ENCODE measurements at regions of chr13 and their contacts with region 1.

Region 1: GRCh38 chr13:44470638-44471562 is 97.3 kb downstream of the SERP2 start:
- DNase-seq: no peak
- ATAC-seq: peak in 3 of 4 donors; percentile 18 to 38 (median 23)
- H3K4me3 ChIP-seq: no peak overlapping the region
- H3K27ac ChIP-seq: no peak overlapping the region
- H3K4me1 ChIP-seq: peaks cover 48% of the 10 kb centered on the region
- H3K27me3 ChIP-seq: no peaks in the 10 kb centered on the region
- CTCF ChIP-seq: peak; percentile 66

Region 2: DNA sequence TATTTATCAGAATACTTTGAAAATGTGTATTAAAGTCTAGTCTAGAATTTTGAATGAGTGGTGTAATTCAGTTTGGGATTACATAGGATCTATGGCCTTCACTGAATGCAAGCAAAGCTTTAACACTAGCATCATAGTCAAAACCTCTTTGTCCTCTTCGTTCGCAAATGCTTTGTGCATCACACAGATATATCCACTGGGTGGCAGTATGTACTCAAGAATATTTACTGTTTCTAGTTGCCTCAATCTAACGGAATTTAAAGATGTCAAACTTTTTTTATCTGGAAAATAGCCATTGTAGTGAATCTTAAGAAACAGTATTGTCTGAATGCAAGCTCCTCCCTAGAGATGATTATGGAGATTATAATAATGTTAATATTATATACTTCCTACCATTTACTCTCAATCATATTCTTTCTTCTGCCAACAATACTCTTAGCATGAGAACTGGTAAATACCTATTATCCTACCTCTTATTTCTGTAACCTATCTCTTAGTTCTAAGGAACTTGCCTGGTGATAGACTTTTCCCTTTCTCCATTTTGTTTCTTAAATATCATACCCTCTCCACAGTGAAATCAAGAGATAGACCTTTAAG is 565.4 kb before region 1 on chr13:
- intact Hi-C with region 1: loop called in 1 of 2 experiments (anchors 5 kb)
- DNase-seq: no peak
- ATAC-seq: peak; percentile 66 to 89 (median 82)
- H3K4me3 ChIP-seq: no peak overlapping the region
- H3K27ac ChIP-seq: no peak overlapping the region
- H3K4me1 ChIP-seq: peaks cover 6% of the 10 kb centered on the region
- H3K27me3 ChIP-seq: no peaks in the 10 kb centered on the region
- CTCF ChIP-seq: peak; percentile 88

Measured in psoas muscle (tissue), 8 donors.